Activated CD8-positive, alpha-beta memory T cell treated with anti-CD3 and anti-CD28 coated beads, Interleukin-2, amount 10 ng/mL, durations not matched to agents 7 days and 5 days (primary cell): ENCODE measurements at regions of chrX and their contacts with region 1.

Region 1: DNA sequence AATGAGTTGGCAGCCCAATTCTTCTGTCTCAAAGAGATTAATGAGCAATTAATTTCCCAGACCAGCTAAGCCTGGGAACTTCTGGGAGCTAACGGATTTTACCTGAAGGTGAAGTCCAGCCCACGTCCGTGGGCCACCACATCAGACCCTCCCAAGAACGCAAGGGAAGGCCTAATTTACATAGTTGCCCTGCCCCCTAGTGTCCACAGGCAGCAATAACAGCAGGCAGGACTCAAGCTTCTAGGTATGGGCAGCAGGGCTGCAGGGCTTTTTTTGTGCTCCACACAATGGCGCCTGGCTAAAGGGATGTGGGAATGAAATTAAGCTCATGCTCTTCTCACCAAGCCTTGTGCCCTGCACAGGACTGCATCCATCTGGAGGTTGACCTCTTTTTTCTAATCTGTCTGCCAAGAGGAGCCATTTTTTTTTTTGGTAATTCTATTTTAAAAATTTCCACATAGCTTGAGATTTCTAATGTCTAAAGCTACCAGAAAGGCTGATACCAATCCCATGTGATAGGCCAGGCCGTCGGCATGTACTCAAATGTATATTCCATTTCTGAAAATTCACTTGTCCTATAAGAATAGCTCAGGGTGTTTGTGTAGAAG is 111.9 kb upstream of the TMEM164 start:
- DNase-seq: peak; percentile 62
- ATAC-seq: peak; percentile 57
- H3K4me3 Mint-ChIP-seq: no peak overlapping the region
- H3K27ac Mint-ChIP-seq: no peak overlapping the region
- H3K4me1 Mint-ChIP-seq: peaks cover 1% of the 10 kb centered on the region
- H3K27me3 Mint-ChIP-seq: peaks cover 12% of the 10 kb centered on the region

Region 2: GRCh38 chrX:109485470-109486340 is 405.3 kb before region 1 on chrX:
- CTCF ChIA-PET with region 1: interaction called, 16 read pairs
- DNase-seq: peak; percentile 65
- ATAC-seq: peak; percentile 49
- H3K4me3 Mint-ChIP-seq: no peak overlapping the region
- H3K27ac Mint-ChIP-seq: no peak overlapping the region
- H3K4me1 Mint-ChIP-seq: peaks cover 2% of the 10 kb centered on the region
- H3K27me3 Mint-ChIP-seq: no peaks in the 10 kb centered on the region

Region 3: DNA sequence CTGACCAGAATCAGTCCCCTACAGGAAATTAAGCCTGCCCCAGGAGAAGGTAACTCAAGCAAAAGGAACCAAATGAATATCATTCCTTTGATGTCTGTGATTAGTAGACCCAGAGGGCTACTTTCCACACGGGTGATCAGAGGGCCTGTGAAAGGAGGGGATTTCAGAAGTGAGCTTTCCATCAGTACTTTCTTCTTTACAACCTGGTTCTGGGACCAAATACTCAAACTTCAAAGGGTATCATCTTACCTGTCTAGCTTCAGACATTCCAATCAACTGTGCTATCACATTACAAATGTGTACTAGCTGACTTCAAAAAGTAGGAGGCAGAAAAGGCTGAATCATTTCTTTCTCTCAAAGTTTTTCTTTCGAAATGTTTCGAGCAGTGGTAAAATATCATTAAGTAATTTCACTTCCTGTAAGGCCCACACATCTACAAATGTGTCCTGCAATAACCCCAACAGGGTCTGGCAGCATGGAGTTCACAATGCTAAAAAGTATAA is 181.8 kb before region 1 on chrX:
- CTCF ChIA-PET with region 1: interaction called, 12 read pairs
- DNase-seq: no peak
- ATAC-seq: peak; percentile 71
- H3K4me3 Mint-ChIP-seq: peak overlapping the region; percentile 49
- H3K27ac Mint-ChIP-seq: peak overlapping the region; percentile 86
- H3K4me1 Mint-ChIP-seq: peaks cover 60% of the 10 kb centered on the region
- H3K27me3 Mint-ChIP-seq: no peaks in the 10 kb centered on the region

Region 4: GRCh38 chrX:109739625-109740432 is 151.2 kb before region 1 on chrX:
- CTCF ChIA-PET with region 1: no interaction called
- DNase-seq: no peak
- ATAC-seq: no peak
- H3K4me3 Mint-ChIP-seq: no peak overlapping the region
- H3K27ac Mint-ChIP-seq: no peak overlapping the region
- H3K4me1 Mint-ChIP-seq: peaks cover 2% of the 10 kb centered on the region
- H3K27me3 Mint-ChIP-seq: no peaks in the 10 kb centered on the region

Region 5: DNA sequence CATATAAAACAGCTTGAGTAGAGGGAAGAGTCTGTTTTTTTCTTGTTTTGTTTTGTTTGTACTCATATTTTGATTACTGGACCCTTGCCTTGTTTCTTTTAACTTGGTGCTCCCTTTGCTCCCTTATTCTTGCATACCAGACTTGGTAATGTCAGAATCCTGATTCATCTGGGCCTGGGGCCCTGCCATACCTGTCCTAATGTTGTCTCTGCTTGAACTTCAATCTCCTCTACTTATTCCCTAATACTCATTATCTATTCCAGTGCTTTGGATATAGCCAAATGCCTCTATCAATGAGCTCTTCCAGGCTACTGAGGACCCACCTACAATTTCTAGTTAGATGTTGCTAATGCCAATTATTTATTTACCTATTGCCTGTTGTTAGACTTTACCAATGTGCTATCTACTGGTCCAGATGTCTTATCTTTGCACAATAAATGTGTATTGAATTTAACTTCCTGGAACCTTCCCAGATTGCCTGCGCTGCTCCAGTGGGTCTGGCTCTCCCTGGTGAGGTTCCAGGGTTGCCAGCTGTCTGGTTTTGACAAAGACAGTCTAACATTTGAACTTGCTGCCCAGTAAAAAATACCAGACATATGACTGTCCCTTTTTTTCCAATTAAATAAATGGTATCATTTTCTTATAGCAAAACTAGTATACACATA is 93.6 kb before region 1 on chrX:
- CTCF ChIA-PET with region 1: no interaction called
- DNase-seq: no peak
- ATAC-seq: no peak
- H3K4me3 Mint-ChIP-seq: no peak overlapping the region
- H3K27ac Mint-ChIP-seq: no peak overlapping the region
- H3K4me1 Mint-ChIP-seq: peaks cover 2% of the 10 kb centered on the region
- H3K27me3 Mint-ChIP-seq: no peaks in the 10 kb centered on the region

Region 6: GRCh38 chrX:109880629-109881028 is 10.4 kb before region 1 on chrX:
- CTCF ChIA-PET with region 1: interaction called, 22 read pairs
- DNase-seq: no peak
- ATAC-seq: no peak
- H3K4me3 Mint-ChIP-seq: no peak overlapping the region
- H3K27ac Mint-ChIP-seq: no peak overlapping the region
- H3K4me1 Mint-ChIP-seq: peaks cover 4% of the 10 kb centered on the region
- H3K27me3 Mint-ChIP-seq: peaks cover 5% of the 10 kb centered on the region